AG04450 (cell line): ENCODE measurements at regions of chr9 and their contacts with region 1.

Region 1: GRCh38 chr9:34603610-34604231 is 8.2 kb downstream of the RPP25L start:
- DNase-seq: peak; percentile 29
- H3K4me3 ChIP-seq: no peak overlapping the region
- H3K27ac ChIP-seq: no peak overlapping the region
- H3K27me3 ChIP-seq: peaks cover 31% of the 10 kb centered on the region
- CTCF ChIP-seq: peak; percentile 95

Region 2: GRCh38 chr9:34332076-34332964 is 271.4 kb before region 1 on chr9:
- CTCF ChIA-PET with region 1: interaction called, 26 read pairs
- POLR2A ChIA-PET with region 1: no interaction called
- DNase-seq: no peak
- H3K4me3 ChIP-seq: no peak overlapping the region
- H3K27ac ChIP-seq: no peak overlapping the region
- H3K27me3 ChIP-seq: no peaks in the 10 kb centered on the region
- CTCF ChIP-seq: peak; percentile 58

Region 3: DNA sequence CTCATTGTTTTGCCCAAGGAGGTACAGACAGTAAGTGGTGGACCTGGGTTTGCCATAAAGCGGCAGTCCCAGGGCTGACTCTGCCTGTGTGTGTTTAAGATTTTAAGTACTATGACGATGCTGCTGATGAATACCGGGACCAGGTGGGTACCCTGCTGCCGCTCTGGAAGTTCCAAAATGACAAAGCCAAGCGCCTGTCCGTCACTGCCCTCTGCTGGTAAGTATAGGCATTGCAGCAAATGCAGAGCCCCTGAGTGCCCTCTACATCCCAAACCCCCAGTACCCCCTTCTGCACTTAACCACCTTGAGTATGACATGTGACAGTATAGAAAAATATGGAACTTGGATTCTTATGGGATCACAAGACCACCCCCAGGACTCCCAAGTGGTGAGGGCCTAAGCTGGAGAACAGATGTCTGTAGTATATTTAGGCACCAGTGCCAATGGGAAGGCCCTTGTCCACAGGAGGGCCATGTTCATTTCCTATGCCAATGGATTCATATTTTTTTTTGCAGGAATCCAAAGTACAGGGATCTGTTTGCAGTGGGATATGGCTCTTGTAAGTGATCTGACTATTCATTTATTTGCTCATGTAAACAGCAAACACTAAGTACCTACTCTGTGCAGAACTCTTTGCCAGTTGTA is 103.0 kb before region 1 on chr9:
- CTCF ChIA-PET with region 1: interaction called, 22 read pairs
- POLR2A ChIA-PET with region 1: no interaction called
- DNase-seq: no peak
- H3K4me3 ChIP-seq: no peak overlapping the region
- H3K27ac ChIP-seq: no peak overlapping the region
- H3K27me3 ChIP-seq: peaks cover 48% of the 10 kb centered on the region
- CTCF ChIP-seq: peak; percentile 98

Region 4: DNA sequence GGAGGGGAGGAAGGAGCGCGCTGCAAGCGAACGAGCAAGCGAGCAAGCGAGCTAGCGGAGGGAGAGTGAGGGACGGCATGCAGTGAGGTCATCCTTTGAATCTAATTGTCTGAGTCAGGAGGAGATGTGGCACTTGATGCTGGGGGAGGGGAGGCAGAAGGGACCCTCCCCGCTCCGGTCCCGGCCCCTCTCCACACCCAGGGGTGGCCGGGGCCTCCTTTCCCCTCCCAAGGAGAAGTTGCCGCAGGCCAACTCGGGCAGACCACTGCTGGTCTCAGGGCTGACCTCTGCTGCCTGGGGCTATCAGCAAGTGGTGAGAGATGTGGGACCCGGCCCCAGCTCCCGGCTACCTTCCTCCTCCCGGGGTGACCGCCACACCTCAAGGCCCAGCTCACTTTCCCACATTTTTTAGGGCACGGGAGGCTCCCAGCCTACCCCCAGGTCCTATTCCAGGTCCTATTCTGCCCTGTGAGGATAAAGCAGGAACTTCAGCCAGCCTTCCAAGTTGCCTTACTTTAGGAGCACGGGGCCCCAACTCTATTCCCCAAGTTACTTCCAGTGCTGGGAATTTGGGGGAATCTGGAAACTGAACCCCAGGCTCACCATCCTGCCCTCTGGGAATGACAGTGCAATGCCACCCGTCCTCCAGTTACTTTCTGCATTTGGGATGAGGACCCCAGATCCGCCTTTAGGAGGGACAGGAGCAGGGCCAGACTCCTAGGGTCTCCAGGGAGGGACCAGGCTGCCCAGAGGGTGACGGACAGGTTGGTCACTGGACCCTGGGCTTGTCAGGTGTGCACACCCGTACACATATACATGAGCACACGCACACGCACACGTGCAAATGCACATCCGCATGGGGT is 25.2 kb before region 1 on chr9:
- CTCF ChIA-PET with region 1: interaction called, 11 read pairs
- POLR2A ChIA-PET with region 1: no interaction called
- DNase-seq: no peak
- H3K4me3 ChIP-seq: no peak overlapping the region; the same call in 1 of the 2 replicates
- H3K27ac ChIP-seq: no peak overlapping the region
- H3K27me3 ChIP-seq: peaks cover 84% of the 10 kb centered on the region
- CTCF ChIP-seq: no peak

Region 5: GRCh38 chr9:34620061-34620994 is 16.6 kb after region 1 on chr9 and contains the start of gene DCTN3:
- CTCF ChIA-PET with region 1: interaction called, 22 read pairs
- POLR2A ChIA-PET with region 1: no interaction called
- DNase-seq: peak; percentile 82
- H3K4me3 ChIP-seq: peak within 1 kb of the TSS; percentile 96
- H3K27ac ChIP-seq: peak within 1 kb of the TSS; percentile 11
- H3K27me3 ChIP-seq: peaks cover 26% of the 10 kb centered on the region
- CTCF ChIP-seq: no peak
- polyA plus RNA-seq, gene DCTN3: 97.6 and 103 TPM in 2 replicates